GM18951 (cell line): ENCODE measurements at regions of chr11 and their contacts with region 1.

Region 1: GRCh38 chr11:88552377-88553062 is 215.0 kb upstream of the CTSC start:
- POLR2A ChIP-seq: no peak

Region 2: GRCh38 chr11:87352759-87353707 is 1199.5 kb before region 1 on chr11:
- in situ Hi-C with region 1: loop called (anchors 25 kb)
- POLR2A ChIP-seq: no peak

Region 3: GRCh38 chr11:88016392-88017170 is 535.9 kb before region 1 on chr11:
- in situ Hi-C with region 1: loop called (anchors 25 kb)
- POLR2A ChIP-seq: no peak

Region 4: GRCh38 chr11:88266919-88267318 is 285.6 kb before region 1 on chr11:
- in situ Hi-C with region 1: no loop called
- POLR2A ChIP-seq: no peak

Region 5: DNA sequence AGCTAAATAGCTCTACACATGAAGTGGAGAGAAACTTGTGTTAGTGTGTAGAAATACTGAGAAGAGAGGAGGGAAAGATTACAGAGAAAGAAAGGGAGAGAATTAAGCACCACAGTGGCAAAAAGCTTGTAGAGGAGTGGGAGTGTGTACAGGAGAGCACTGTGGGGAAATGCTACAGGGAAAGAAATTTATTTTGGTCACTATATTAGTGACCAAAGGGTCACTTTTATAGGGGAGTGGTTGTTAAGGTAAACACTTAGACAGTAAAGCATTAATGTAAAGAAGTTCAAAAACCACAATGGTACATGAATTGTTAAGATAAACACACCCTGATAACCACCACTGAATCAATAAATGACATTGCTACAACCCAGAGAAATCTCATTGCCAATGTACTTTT is 92.2 kb after region 1 on chr11:
- in situ Hi-C with region 1: no loop called
- POLR2A ChIP-seq: no peak